Activated CD8-positive, alpha-beta T cell treated with anti-CD3 and anti-CD28 coated beads, Interleukin-2, amount 10 ng/mL, durations not matched to agents 7 days and 5 days (primary cell): ENCODE measurements at regions of chr12 and their contacts with region 1.

Region 1: DNA sequence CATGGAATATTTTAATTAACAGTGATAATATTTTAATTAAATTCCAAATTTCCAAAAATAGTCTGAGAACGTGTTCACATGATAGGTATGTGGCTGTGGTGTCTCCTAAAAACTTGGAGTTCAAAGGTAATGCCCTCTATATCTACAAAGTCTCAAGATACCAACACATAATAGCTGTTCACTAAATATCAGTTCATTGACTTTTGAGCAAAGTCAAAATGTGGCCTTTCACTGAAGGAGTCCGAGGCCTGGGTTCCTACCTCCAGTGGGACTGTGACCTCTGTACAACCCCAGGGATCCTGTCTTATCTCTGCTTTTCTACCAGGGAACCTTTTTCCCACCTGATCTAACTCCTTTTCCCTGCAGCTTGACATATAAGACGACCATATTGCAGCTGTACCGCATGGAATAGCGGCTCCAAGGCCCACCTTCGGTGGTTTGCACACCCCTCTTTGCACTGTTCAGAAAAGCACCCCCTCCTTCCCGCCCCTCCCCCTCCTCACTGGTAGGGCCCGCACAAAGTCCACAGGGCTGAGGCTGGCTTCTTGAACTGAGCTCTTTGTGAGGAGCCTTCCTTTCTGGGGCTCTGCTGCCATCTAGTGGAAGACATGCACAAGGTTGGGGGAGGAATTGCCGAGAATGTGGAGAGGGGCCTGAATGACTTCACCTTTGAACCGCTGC is 3.1 kb downstream of the CCND2 start:
- DNase-seq: peak; percentile 93
- ATAC-seq: peak; percentile 13
- H3K4me3 Mint-ChIP-seq: peak overlapping the region; percentile 99
- H3K27ac Mint-ChIP-seq: peak overlapping the region; percentile 84
- H3K4me1 Mint-ChIP-seq: peaks cover 59% of the 10 kb centered on the region
- H3K27me3 Mint-ChIP-seq: no peaks in the 10 kb centered on the region

Region 2: GRCh38 chr12:3299929-3300832 is 976.5 kb before region 1 on chr12:
- CTCF ChIA-PET with region 1: interaction called, 19 read pairs
- POLR2A ChIA-PET with region 1: no interaction called
- DNase-seq: peak; percentile 88
- ATAC-seq: peak; percentile 90
- H3K4me3 Mint-ChIP-seq: peak overlapping the region; percentile 25
- H3K27ac Mint-ChIP-seq: peak overlapping the region; percentile 43
- H3K4me1 Mint-ChIP-seq: peaks cover 11% of the 10 kb centered on the region
- H3K27me3 Mint-ChIP-seq: no peaks in the 10 kb centered on the region

Region 3: GRCh38 chr12:3973978-3974644 is 302.6 kb before region 1 on chr12:
- CTCF ChIA-PET with region 1: interaction called, 14 read pairs
- POLR2A ChIA-PET with region 1: interaction called, 7 read pairs
- DNase-seq: no peak
- ATAC-seq: peak; percentile 42
- H3K4me3 Mint-ChIP-seq: peak overlapping the region; percentile 20
- H3K27ac Mint-ChIP-seq: peak overlapping the region; percentile 81
- H3K4me1 Mint-ChIP-seq: peaks cover 60% of the 10 kb centered on the region
- H3K27me3 Mint-ChIP-seq: peaks cover under 1% of the 10 kb centered on the region

Region 4: DNA sequence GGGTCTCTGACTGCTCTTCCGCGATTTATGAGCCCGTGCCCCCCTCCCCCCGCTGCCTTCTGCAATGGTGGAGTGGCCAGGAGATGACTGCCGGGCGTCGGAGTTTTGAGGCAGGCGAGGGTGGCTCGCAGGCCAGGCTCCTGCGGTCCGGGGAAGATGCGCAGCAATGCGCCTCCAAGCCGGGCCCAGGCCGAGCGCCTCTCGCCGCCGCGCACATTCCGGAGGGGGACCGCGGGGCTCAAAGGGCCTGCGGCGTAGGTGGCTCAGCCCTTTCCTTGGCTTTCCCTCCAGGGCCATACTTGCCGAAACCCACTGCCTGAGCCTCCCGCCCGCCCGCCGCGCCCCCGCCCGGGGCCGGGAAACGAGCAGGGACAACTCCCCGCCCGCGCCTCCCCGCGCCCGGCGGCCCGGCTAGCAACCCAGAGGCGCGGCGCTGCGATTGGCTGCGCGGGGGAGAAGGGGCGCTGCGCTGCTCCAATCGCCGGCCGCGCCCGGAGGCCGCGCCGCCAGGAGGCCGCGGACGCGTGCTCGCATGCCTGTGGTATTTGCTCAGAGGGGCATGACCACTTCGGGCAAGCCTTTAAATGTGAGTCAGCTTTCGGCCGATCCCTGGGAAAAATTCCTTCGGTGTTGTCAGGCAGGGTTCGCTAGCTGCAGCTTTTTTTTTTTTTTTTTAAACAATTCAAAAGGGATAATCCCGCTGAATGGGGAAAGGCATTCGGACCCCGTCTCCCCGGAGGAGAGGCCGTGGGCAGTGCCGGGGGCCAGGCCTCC is 245.5 kb before region 1 on chr12:
- CTCF ChIA-PET with region 1: interaction called, 37 read pairs
- POLR2A ChIA-PET with region 1: interaction called, 4 read pairs
- DNase-seq: peak; percentile 75
- ATAC-seq: peak; percentile 98
- H3K4me3 Mint-ChIP-seq: peak overlapping the region; percentile 53
- H3K27ac Mint-ChIP-seq: no peak overlapping the region
- H3K4me1 Mint-ChIP-seq: peaks cover 40% of the 10 kb centered on the region
- H3K27me3 Mint-ChIP-seq: peaks cover 22% of the 10 kb centered on the region

Region 5: GRCh38 chr12:4118017-4118510 is 158.6 kb before region 1 on chr12:
- CTCF ChIA-PET with region 1: interaction called, 24 read pairs
- POLR2A ChIA-PET with region 1: interaction called, 24 read pairs
- DNase-seq: peak; percentile 32
- ATAC-seq: peak; percentile 30
- H3K4me3 Mint-ChIP-seq: peak overlapping the region; percentile 55
- H3K27ac Mint-ChIP-seq: peak overlapping the region; percentile 88
- H3K4me1 Mint-ChIP-seq: peaks cover 73% of the 10 kb centered on the region
- H3K27me3 Mint-ChIP-seq: no peaks in the 10 kb centered on the region

Region 6: DNA sequence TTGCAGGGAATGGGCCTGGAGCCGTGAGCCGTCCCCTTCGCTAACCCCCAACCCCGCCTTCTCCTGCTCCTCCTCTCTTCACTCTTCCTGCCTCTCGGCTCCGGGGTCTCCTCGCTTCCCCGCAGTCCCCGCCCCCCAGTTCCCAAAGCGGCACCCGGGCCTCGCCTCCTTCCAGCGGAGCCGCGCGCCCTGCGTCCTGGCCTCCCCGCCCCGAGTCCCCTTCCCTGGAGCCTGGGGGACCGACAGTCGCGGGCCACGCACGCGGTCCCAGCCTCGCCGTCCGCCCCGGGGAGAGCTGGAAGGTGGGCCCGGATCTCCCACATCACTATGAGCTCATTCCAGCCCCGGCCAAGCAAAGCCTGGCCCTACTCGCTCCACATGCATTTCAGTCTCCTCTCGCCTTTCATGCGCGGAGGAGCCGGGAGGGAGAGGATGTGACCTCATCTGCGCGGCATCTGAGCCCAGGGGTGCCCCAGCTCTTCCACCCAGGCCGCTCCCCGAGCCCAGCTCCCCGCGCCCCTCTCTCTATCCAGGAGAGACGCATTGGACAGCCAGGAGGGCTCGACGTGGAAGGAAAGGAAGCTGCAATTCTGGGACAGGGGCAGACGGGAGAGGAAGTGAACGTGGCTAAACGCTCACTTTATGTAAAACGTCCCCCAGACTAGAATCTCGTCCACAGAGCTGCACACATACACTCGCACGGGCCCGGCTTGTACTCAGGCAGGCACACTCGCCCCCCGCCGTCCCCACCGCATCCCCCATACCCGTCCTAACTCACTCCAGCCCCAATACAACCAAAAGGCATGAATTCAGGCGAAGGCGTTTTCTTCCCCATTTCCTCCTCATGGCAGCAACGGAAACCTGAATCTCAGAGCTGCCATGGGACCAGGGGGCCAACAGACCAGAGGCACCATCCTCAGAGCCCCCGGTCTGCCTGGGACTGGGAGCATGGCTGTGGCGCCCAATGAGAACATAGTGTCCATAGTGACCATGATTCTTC is 111.8 kb before region 1 on chr12:
- CTCF ChIA-PET with region 1: interaction called, 23 read pairs
- POLR2A ChIA-PET with region 1: interaction called, 34 read pairs
- DNase-seq: peak; percentile 77
- ATAC-seq: peak; percentile 97
- H3K4me3 Mint-ChIP-seq: peak overlapping the region; percentile 75
- H3K27ac Mint-ChIP-seq: peak overlapping the region; percentile 94
- H3K4me1 Mint-ChIP-seq: peaks cover 55% of the 10 kb centered on the region
- H3K27me3 Mint-ChIP-seq: peaks cover 2% of the 10 kb centered on the region

Region 7: GRCh38 chr12:4287325-4288211 is 10.9 kb after region 1 on chr12:
- CTCF ChIA-PET with region 1: interaction called, 79 read pairs
- POLR2A ChIA-PET with region 1: interaction called, 4 read pairs
- DNase-seq: no peak
- ATAC-seq: no peak
- H3K4me3 Mint-ChIP-seq: no peak overlapping the region
- H3K27ac Mint-ChIP-seq: peak overlapping the region; percentile 70
- H3K4me1 Mint-ChIP-seq: peaks cover 96% of the 10 kb centered on the region
- H3K27me3 Mint-ChIP-seq: no peaks in the 10 kb centered on the region

Region 8: GRCh38 chr12:4330203-4330602 is 53.5 kb after region 1 on chr12:
- CTCF ChIA-PET with region 1: no interaction called
- POLR2A ChIA-PET with region 1: no interaction called
- DNase-seq: no peak
- ATAC-seq: no peak
- H3K4me3 Mint-ChIP-seq: no peak overlapping the region
- H3K27ac Mint-ChIP-seq: no peak overlapping the region
- H3K4me1 Mint-ChIP-seq: peaks cover 7% of the 10 kb centered on the region
- H3K27me3 Mint-ChIP-seq: no peaks in the 10 kb centered on the region

Region 9: DNA sequence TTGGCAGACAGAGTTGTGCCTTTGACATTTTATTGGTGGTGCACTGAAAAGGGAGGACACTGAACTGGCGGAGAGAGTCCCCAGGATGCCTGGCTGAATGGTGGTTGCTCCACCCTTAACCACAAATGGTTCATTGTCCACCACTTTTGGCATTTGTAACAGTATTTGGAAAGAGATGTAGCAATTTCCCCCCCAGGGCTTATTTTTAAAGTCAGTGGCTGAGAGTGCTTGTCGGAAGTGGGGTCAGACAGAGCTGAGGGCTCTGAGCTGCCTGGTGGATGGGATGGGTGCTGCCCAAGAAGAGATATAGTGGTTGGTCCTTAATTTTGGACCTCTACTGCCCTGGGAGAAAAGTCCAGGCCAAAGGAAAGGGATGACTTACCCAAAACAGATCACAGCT is 200.5 kb after region 1 on chr12:
- CTCF ChIA-PET with region 1: no interaction called
- POLR2A ChIA-PET with region 1: no interaction called
- DNase-seq: no peak
- ATAC-seq: no peak
- H3K4me3 Mint-ChIP-seq: no peak overlapping the region
- H3K27ac Mint-ChIP-seq: no peak overlapping the region
- H3K4me1 Mint-ChIP-seq: no peaks in the 10 kb centered on the region
- H3K27me3 Mint-ChIP-seq: peaks cover 45% of the 10 kb centered on the region